HCT116 (cell line): ENCODE measurements at regions of chr1 and their contacts with region 1.

Region 1: GRCh38 chr1:167442124-167442848 is 76.0 kb downstream of the CD247 start:
- DNase-seq: peak; percentile 77
- ATAC-seq: peak; percentile 99
- H3K4me3 ChIP-seq: no peak overlapping the region
- H3K27ac ChIP-seq: no peak overlapping the region
- H3K4me1 ChIP-seq: peaks cover 0 to 16% of the 10 kb centered on the region in 2 experiments; a peak in 3 of 4 replicates
- H3K27me3 ChIP-seq: no peaks in the 10 kb centered on the region
- CTCF ChIP-seq: peak; percentile 88 to 95 (median 93)
- POLR2A ChIP-seq: no peak
- RAD21 ChIP-seq: peak; percentile 99

Region 2: DNA sequence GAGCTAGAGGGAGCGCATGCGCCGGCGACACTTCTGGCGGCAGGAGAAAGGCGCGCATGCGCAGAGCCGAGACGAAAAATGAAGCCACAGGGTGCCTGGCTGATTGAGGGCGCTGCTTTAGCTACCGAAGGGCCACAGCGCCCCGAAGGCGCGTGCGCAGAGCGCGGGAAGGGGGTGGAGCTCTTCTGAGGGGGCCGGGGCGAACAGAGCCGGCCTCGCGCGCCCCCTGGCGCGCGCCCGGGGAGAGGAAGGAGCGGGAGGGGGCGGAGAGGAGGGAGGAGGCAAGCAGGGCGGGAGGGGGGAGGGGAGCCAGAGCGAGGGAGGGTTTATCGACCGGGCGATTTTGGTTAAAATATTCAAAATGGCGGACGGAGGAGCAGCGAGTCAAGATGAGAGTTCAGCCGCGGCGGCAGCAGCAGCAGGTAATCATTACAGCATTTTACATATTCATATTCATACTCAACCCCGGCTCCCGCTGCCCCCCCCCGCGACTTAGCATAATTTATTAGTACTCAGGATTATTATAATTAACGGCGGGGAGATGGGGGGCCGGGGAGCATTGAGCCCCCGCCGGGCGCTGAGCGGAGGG is 221.7 kb before region 1 on chr1 and contains the start of gene POU2F1:
- CTCF ChIA-PET with region 1: interaction called, 3 read pairs
- POLR2A ChIA-PET with region 1: interaction called, 10 read pairs
- RAD21 ChIA-PET with region 1: no interaction called
- intact Hi-C with region 1: loop called (anchors 1 kb)
- DNase-seq: peak; percentile 96
- ATAC-seq: peak; percentile 85
- H3K4me3 ChIP-seq: peak within 1 kb of the TSS; percentile 69 to 75
- H3K27ac ChIP-seq: peak within 1 kb of the TSS; percentile 95
- H3K4me1 ChIP-seq: peaks cover 14 to 39% of the 10 kb centered on the region in 2 experiments
- H3K27me3 ChIP-seq: no peaks in the 10 kb centered on the region
- CTCF ChIP-seq: peak; percentile 61 to 70 (median 66); a peak in 5 of 6 replicates
- POLR2A ChIP-seq: no peak
- RAD21 ChIP-seq: peak; percentile 64
- total RNA-seq, gene POU2F1: 24.5 TPM

Region 3: DNA sequence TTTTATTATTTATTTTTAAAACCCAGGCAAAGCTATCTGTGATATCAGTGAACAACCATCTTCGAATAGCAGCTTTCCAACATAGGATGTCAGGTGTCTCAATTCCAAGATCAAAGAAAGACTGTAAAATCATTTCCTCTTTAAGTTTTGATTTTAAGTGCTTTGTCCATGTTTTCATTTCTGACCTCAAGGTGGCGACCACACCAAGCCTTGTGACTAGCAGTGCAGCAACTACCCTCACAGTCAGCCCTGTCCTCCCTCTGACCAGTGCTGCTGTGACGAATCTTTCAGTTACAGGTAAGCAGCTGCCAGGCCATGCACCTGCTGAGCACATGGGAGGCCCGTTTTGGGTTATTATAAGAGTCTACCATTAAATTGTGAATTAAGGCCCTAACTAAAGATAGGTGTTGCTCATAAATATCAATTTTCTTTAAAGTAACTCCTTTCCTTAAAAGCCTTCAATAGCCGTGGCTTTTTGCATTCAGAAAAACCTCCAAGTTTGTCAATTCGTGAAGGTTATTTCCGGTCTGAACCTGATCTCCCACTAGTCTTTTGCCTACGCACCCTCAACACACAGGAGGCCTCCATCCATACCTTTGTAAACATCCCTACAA is 40.9 kb before region 1 on chr1:
- CTCF ChIA-PET with region 1: no interaction called
- POLR2A ChIA-PET with region 1: no interaction called
- RAD21 ChIA-PET with region 1: no interaction called
- intact Hi-C with region 1: loop called (anchors 1 kb)
- DNase-seq: peak; percentile 36
- ATAC-seq: peak; percentile 99
- H3K4me3 ChIP-seq: no peak overlapping the region
- H3K27ac ChIP-seq: no peak overlapping the region
- H3K4me1 ChIP-seq: peaks cover 0 to 4% of the 10 kb centered on the region in 2 experiments; a peak in 1 of 4 replicates
- H3K27me3 ChIP-seq: no peaks in the 10 kb centered on the region
- CTCF ChIP-seq: peak; percentile 55 to 62 (median 56); a peak in 5 of 6 replicates
- POLR2A ChIP-seq: no peak
- RAD21 ChIP-seq: peak; percentile 77